Activated CD4-positive, alpha-beta memory T cell treated with anti-CD3 and anti-CD28 coated beads for 36 hours (primary cell): ENCODE measurements at regions of chr11 and their contacts with region 1.

Region 1: GRCh38 chr11:19903620-19904069 is 191.0 kb downstream of the NAV2 start:
- DNase-seq: peak; percentile 69
- H3K4me3 Mint-ChIP-seq: no peak overlapping the region
- H3K27ac Mint-ChIP-seq: no peak overlapping the region
- H3K4me1 Mint-ChIP-seq: no peaks in the 10 kb centered on the region
- H3K27me3 Mint-ChIP-seq: no peaks in the 10 kb centered on the region

Region 2: GRCh38 chr11:19561011-19561410 is 342.6 kb before region 1 on chr11:
- CTCF ChIA-PET with region 1: interaction called, 27 read pairs
- POLR2A ChIA-PET with region 1: no interaction called
- intact Hi-C with region 1: loop called (anchors 1 kb)
- DNase-seq: no peak
- H3K4me3 Mint-ChIP-seq: no peak overlapping the region
- H3K27ac Mint-ChIP-seq: no peak overlapping the region
- H3K4me1 Mint-ChIP-seq: no peaks in the 10 kb centered on the region
- H3K27me3 Mint-ChIP-seq: peaks cover 7% of the 10 kb centered on the region

Region 3: DNA sequence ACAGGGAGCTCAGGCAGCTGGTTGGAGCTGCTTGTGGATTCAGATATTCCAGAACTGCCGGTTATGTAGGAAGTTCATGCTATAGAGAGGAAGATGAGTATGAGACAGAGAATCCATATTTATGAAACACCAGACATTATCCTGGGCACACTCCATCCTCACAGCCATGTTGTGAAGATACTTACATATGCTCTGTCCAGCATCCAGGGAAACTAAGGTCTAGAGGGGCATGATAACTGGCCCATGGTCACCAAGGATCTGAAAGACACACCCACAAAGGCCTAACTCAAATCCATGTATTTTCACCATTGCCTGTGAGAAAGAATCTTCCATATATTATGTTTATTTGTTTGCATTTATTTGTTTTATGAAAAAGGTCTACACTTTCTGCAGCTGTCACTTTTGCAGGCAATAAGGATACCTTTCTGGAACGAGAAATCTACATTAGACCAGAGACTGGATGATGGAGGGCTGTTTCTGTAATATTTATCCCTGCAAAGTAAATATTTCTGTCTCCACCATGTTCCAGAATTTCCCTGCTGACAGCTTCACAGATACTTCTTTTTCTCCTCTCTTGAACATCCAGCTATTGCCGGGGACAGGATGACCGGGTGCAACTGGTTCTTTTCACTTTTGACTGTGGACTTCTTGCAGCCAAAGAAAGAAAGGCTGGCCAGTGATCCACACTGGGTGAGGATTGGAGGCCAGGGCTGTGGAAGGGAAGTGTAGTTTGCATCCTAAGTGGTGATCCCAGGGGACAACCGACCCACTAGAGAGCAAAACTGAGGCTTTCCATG is 336.9 kb before region 1 on chr11:
- CTCF ChIA-PET with region 1: interaction called, 24 read pairs
- POLR2A ChIA-PET with region 1: no interaction called
- intact Hi-C with region 1: loop called (anchors 1 kb)
- DNase-seq: no peak
- H3K4me3 Mint-ChIP-seq: no peak overlapping the region
- H3K27ac Mint-ChIP-seq: no peak overlapping the region
- H3K4me1 Mint-ChIP-seq: no peaks in the 10 kb centered on the region
- H3K27me3 Mint-ChIP-seq: peaks cover 8% of the 10 kb centered on the region

Region 4: DNA sequence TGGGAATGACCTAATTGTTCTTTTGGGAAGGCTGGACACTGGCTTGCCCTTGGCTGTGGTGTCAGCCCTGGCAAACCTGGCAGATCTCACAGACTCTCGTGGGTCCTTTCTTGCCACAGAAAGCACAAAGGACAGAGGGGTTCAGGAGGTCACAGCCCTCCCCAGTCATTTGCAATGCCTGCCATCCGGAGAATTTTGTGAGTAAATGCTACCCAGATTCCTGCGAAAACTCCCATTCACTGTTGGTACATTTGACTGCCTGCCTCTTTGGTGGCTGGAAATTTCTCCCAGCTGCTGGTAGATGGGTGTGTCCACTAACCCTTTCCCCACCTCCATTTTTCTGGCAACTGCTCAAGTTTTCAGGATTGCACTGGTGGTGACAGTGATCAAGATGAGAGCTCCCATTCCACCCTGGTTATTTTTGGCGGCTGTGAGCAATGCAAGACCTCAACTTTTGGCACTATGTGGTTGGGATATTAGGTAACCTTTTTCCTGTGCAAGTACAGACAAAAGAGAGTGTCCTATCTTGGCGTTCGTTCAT is 35.3 kb before region 1 on chr11:
- CTCF ChIA-PET with region 1: no interaction called
- POLR2A ChIA-PET with region 1: no interaction called
- intact Hi-C with region 1: no loop called
- DNase-seq: no peak
- H3K4me3 Mint-ChIP-seq: no peak overlapping the region
- H3K27ac Mint-ChIP-seq: no peak overlapping the region
- H3K4me1 Mint-ChIP-seq: no peaks in the 10 kb centered on the region
- H3K27me3 Mint-ChIP-seq: no peaks in the 10 kb centered on the region